Ovary (tissue), 10 donors: ENCODE measurements at regions of chr3 and their contacts with region 1.

Region 1: GRCh38 chr3:188489639-188490405 is 335.9 kb downstream of the LPP start:
- DNase-seq: no peak
- H3K4me3 ChIP-seq: no peak overlapping the region
- H3K27ac ChIP-seq: no peak overlapping the region
- H3K4me1 ChIP-seq: peaks cover 8% of the 10 kb centered on the region
- H3K27me3 ChIP-seq: no peaks in the 10 kb centered on the region
- CTCF ChIP-seq: no peak
- EP300 ChIP-seq: no peak
- POLR2A ChIP-seq: no peak

Region 2: DNA sequence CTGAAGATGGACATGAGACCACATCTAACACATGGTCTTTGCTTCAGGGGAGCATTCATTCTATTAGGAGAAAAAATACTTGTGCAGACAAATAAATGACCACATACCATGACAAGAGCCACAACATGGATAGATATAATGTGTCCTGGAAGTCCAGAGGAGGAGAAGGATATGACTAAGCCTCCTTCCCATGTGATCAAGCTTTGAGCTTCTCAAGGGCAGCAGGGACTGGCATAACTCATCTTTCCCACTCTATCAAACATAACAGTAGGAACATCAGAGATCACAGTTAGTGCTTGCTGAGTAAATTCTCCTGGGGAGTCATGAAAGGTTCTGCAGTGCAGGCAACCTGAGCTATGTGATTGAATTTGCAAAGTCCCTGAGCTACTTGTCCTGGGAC is 421.9 kb before region 1 on chr3:
- intact Hi-C with region 1: loop called in 1 of 4 experiments (anchors 5 kb)
- DNase-seq: no peak
- H3K4me3 ChIP-seq: no peak overlapping the region
- H3K27ac ChIP-seq: no peak overlapping the region
- H3K4me1 ChIP-seq: no peaks in the 10 kb centered on the region
- H3K27me3 ChIP-seq: no peaks in the 10 kb centered on the region
- CTCF ChIP-seq: no peak
- EP300 ChIP-seq: no peak
- POLR2A ChIP-seq: no peak